ENCODE measurements at regions of chr11 and their contacts with region 1.

Region 1: DNA sequence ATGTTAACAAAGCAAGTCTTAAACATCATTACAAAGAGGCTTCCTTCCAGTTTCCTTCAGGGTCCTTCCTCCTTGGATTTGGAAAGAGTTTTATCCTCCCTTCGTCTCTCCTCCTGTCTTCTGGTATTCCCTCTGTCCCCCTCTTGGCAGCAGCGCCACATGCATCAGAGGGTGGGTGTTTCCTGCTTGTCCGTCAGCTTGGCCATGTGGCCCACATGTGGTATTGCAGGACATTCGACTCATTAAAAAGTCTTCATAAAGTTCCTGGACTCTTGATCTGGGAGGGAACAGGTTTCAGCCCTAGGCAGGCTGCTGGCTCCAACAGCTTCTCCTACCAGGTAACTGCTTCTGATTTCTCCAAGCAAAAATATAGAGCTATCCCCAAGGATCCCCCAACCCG is 189.8 kb downstream of the CSNK2A3 start:
- DNase-seq: no peak
- H3K4me3 ChIP-seq: no peak overlapping the region
- H3K27ac ChIP-seq: no peak overlapping the region
- H3K4me1 ChIP-seq: peaks cover 0 to 2% (median 0%) of the 10 kb centered on the region in 4 experiments; a peak in 1 of 7 replicates
- H3K27me3 ChIP-seq: peaks cover 0 to 2% (median 0%) of the 10 kb centered on the region in 4 experiments; a peak in 2 of 7 replicates
- CTCF ChIP-seq: peak; percentile 32 to 48 (median 43)
- EP300 ChIP-seq: no peak
- POLR2A ChIP-seq: no peak
- RAD21 ChIP-seq: peak in 1 of 2 experiments; percentile 36; a peak in 2 of 4 replicates

Region 2: DNA sequence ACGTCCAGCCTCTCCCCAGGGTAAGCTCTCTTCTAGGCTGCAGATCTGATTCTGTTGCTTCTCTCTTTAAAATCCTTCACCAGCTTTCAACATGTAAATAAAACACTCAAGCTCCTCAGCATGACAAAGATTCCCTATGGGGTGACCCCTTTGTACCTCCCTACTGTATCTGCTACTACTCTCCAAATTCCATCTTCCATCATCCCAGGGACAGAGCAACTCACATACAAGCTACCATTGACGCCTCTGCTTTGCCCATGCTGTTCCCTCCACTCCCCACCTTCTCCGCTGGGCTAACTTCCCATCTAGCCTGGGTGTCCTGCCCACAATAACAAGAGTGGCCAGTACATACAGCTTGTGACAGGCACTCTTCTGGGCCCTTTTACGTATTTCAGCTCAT is 97.8 kb before region 1 on chr11:
- CTCF ChIA-PET with region 1: no interaction called
- POLR2A ChIA-PET with region 1: no interaction called
- DNase-seq: no peak
- H3K4me3 ChIP-seq: 0 out of 8 replicates have a peak overlapping the region, but pooled peaks of 1 of the 4 experiments have one; percentile 14
- H3K27ac ChIP-seq: no peak overlapping the region
- H3K4me1 ChIP-seq: peaks cover 0 to 8% (median 4%) of the 10 kb centered on the region in 4 experiments; a peak in 2 of 7 replicates
- H3K27me3 ChIP-seq: no peaks in the 10 kb centered on the region; a peak in 1 of 7 replicates
- CTCF ChIP-seq: no peak
- EP300 ChIP-seq: 0 out of 3 replicates have a peak, but pooled peaks of 1 of the 2 experiments have one; percentile 17
- POLR2A ChIP-seq: peak in 1 of 2 experiments; percentile 23; a peak in 1 of 3 replicates
- RAD21 ChIP-seq: no peak

Region 3: DNA sequence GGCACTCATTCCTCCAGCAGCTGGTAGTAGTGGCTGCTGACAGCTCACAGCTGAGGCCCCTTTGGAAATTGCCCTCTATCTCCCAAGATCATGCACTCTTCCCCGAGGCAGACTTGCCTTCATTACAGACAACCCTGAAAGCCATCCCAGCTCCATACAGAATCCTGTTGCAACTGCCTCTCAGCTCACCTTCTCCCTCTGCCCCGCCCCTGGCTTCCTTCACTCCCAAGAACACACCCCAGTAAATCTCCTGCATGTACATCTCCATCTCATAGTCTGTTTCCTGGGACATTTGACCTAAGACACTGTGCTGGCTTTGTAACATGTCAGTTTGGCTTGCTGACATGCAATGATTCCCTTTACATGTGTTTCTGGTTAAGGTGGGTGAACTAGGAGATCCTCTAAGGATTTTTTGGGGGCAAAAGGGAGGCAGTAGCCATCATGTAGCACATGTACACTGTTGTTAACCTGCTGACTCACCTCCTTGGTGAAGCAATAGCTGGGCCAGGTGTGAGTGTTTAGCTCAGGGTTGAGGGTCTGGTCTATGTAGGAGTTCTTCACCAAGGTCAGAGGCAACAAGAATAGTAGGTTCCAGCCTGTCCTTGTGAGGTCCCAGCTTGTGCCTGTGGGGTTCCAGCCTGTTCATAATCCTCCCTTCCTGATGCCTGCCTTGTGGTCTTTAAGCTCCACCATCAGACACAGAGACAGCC is 10.2 kb after region 1 on chr11:
- CTCF ChIA-PET with region 1: interaction called, 36 read pairs
- POLR2A ChIA-PET with region 1: no interaction called
- DNase-seq: no peak
- H3K4me3 ChIP-seq: no peak overlapping the region
- H3K27ac ChIP-seq: no peak overlapping the region
- H3K4me1 ChIP-seq: 0 out of 7 replicates have a peak, but pooled peaks cover 0 to 3% (median 0%) of the 10 kb centered on the region in 4 experiments
- H3K27me3 ChIP-seq: peaks cover 0 to 3% (median 0%) of the 10 kb centered on the region in 4 experiments; a peak in 2 of 7 replicates
- CTCF ChIP-seq: no peak
- EP300 ChIP-seq: no peak
- POLR2A ChIP-seq: no peak
- RAD21 ChIP-seq: no peak

Region 4: GRCh38 chr11:11261629-11262028 is 98.4 kb after region 1 on chr11:
- CTCF ChIA-PET with region 1: no interaction called
- POLR2A ChIA-PET with region 1: no interaction called
- DNase-seq: no peak
- H3K4me3 ChIP-seq: no peak overlapping the region
- H3K27ac ChIP-seq: no peak overlapping the region
- H3K4me1 ChIP-seq: peaks cover 0 to 7% (median 2%) of the 10 kb centered on the region in 4 experiments; a peak in 3 of 7 replicates
- H3K27me3 ChIP-seq: no peaks in the 10 kb centered on the region
- CTCF ChIP-seq: no peak
- EP300 ChIP-seq: no peak
- POLR2A ChIP-seq: no peak
- RAD21 ChIP-seq: no peak

Region 5: DNA sequence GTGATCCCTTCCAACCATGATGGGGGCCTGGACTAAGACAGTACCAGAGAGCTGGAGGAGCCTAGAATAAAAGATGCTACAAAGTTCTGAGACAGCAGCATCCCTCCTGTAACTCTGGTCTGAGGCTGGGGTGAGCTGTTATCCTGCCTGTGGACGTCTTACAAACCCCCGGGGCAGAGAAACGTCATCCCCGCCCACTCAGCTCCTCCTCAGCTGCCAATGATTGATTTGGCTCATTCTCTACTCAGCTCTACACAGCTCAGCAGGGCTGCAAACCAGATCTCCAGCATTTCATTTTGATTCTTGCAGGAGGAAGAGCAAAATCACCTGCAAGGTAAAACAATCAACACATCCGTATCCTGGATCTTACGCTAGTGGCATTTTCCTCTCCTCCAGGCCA is 134.3 kb after region 1 on chr11:
- CTCF ChIA-PET with region 1: no interaction called
- POLR2A ChIA-PET with region 1: no interaction called
- DNase-seq: no peak
- H3K4me3 ChIP-seq: no peak overlapping the region
- H3K27ac ChIP-seq: no peak overlapping the region
- H3K4me1 ChIP-seq: no peaks in the 10 kb centered on the region
- H3K27me3 ChIP-seq: no peaks in the 10 kb centered on the region
- CTCF ChIP-seq: no peak
- EP300 ChIP-seq: no peak
- POLR2A ChIP-seq: no peak
- RAD21 ChIP-seq: no peak

Region 6: DNA sequence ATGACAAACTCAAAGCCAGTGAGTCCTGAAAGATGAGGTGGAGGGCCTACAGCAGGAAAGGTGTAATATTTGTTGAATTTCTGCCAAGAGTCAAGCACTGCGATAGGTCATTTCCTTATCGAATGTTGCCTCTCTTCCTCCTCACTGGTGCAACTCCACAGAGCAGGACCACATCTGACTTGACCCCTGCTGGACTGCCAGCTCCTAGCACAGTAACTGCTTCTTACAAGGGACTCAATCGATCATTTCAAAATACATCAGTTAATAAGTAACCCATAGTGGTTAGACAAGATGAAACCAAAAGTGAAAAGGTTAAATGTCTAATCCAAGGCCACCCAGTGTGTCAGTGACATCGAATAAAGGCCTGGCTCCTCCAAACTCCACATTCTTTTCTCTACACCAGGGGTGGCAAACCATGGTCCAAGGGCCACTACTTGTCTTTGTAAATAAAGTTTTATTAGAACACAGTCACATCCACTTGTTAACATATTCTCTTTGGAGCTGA is 288.3 kb after region 1 on chr11:
- CTCF ChIA-PET with region 1: no interaction called
- POLR2A ChIA-PET with region 1: no interaction called
- DNase-seq: no peak
- H3K4me3 ChIP-seq: no peak overlapping the region
- H3K27ac ChIP-seq: no peak overlapping the region
- H3K4me1 ChIP-seq: peaks cover 0 to 2% (median under 1%) of the 10 kb centered on the region in 4 experiments; a peak in 2 of 7 replicates
- H3K27me3 ChIP-seq: no peaks in the 10 kb centered on the region
- CTCF ChIP-seq: no peak
- EP300 ChIP-seq: no peak
- POLR2A ChIP-seq: no peak
- RAD21 ChIP-seq: no peak

Measured in H1 (cell line).